ENCODE measurements at regions of chr7 and their contacts with region 1.

Region 1: DNA sequence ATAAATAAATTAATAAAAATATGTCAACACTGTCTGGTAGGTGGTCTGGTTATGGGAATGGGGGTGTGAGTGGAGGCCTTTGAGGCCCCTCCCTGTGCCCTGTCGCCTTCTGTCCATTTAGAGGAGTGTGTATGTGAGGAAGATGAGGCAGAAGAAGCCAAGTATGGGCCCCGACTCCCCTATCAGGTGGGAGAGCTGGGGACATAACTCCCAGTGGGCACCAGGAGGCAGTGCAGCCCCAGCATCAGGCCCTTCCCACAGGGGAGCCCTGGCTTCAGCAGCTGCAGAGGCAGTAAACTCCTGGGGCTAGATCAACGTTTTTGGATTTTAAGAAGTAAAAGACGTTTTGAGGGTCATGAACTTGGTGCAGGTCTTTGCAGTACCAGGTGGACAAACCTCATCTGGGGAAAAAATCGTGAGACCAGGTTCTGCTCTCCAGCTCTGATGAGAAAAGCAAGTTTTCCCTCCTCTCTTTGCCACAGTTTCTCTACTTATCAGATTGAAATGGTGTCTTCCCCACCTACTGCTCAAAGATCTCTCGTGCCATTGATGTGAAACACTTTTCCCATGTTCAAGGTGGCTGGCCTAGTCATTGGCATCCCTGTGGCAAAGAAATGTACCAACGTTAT is 167.8 kb upstream of the EEPD1 start:
- DNase-seq: peak; percentile 55 to 86 (median 72)
- ATAC-seq: peak; percentile 91 to 100 (median 98)
- H3K4me3 ChIP-seq: no peak overlapping the region
- H3K4me3 Mint-ChIP-seq: no peak overlapping the region
- H3K27ac ChIP-seq: no peak overlapping the region
- H3K27ac Mint-ChIP-seq: no peak overlapping the region
- H3K4me1 ChIP-seq: peaks cover 0 to 3% of the 10 kb centered on the region in 2 experiments
- H3K4me1 Mint-ChIP-seq: peaks cover 0 to 3% (median 0%) of the 10 kb centered on the region in 3 donors
- H3K27me3 ChIP-seq: peaks cover 0 to 17% of the 10 kb centered on the region in 2 experiments
- H3K27me3 Mint-ChIP-seq: peaks cover 0 to 2% of the 10 kb centered on the region in 2 donors

Region 2: GRCh38 chr7:35971133-35971891 is 13.9 kb before region 1 on chr7:
- CTCF ChIA-PET with region 1: interaction called in 1 of 2 experiments, 3 read pairs
- POLR2A ChIA-PET with region 1: interaction called in 1 of 2 experiments, 11 read pairs
- DNase-seq: peak in 1 of 35 experiments; percentile 14
- ATAC-seq: peak in 3 of 4 experiments; percentile 32 to 38 (median 34)
- H3K4me3 ChIP-seq: peak overlapping the region in 1 of 2 donors; percentile 38
- H3K4me3 Mint-ChIP-seq: peak overlapping the region; percentile 56 to 71 (median 61)
- H3K27ac ChIP-seq: no peak overlapping the region
- H3K27ac Mint-ChIP-seq: no peak overlapping the region
- H3K4me1 ChIP-seq: no peaks in the 10 kb centered on the region
- H3K4me1 Mint-ChIP-seq: peaks cover 4 to 5% (median 4%) of the 10 kb centered on the region in 3 donors
- H3K27me3 ChIP-seq: peaks cover 0 to 27% of the 10 kb centered on the region in 2 experiments
- H3K27me3 Mint-ChIP-seq: peaks cover 28 to 39% of the 10 kb centered on the region in 2 donors

Region 3: DNA sequence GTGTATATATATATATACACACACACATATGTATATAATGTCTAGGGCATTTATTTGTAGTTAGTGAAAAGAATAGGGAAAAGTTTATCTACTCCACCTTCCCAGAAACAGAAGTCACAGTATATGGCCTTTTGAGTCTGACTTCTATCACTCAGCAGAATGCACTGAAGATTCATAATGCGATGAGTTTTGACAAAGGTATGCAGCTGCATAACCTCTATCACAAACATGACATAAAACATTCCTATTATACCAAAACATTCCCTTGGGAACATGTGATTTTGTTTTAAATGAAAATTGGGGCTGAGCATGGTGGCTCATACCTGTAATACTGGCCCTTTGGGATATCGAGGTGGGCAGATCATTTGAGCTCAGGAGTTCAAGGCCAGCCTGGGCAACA is 30.5 kb after region 1 on chr7:
- CTCF ChIA-PET with region 1: no interaction called
- POLR2A ChIA-PET with region 1: no interaction called
- DNase-seq: no peak
- ATAC-seq: no peak
- H3K4me3 ChIP-seq: no peak overlapping the region
- H3K4me3 Mint-ChIP-seq: no peak overlapping the region
- H3K27ac ChIP-seq: no peak overlapping the region
- H3K27ac Mint-ChIP-seq: no peak overlapping the region
- H3K4me1 ChIP-seq: no peaks in the 10 kb centered on the region
- H3K4me1 Mint-ChIP-seq: no peaks in the 10 kb centered on the region
- H3K27me3 ChIP-seq: peaks cover 0 to 14% of the 10 kb centered on the region in 2 experiments
- H3K27me3 Mint-ChIP-seq: peaks cover 0 to 2% of the 10 kb centered on the region in 2 donors

Region 4: DNA sequence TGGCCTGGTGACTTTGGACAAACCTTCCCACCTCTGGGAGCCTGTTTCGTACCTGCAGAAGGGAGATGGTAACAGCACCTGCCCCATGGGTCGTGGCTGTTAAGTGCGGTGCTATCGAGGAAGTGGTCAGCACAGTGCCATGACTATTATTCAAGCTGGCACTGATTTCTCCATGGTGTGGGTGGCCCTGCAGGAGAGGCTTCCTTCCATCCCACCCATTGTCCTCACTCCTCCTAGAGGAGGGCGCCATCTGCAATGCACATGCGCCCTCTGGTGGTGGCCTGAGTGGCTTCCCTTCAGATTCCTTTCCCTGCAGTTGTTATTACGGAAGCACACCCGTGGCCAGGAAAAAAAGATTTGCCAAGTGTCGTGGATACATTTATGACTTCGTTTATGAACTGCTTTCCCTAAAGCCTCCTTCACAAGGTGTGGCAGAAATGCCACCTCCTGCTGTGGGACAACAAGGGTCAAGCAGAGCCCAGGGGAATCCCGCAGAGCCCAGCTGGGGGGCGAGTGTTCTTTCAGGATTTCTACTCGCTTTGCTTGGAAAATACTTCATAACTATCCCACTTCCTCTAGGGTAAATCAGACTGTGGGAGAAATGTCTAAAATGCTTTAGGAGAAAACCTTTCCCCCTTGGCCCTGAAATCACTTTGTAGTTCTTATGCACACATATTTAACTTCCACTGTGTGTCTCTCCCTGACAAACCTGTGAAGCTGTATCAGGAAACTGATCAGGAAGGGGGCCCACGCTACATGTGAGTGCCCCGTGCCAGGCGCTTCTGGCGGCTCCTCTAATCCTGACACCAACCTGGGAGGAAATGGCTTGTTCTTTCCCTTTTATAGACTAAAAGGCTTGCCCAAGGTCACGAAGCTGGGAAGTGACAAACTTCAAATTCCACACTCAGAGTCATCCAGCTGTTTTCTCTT is 306.4 kb after region 1 on chr7:
- CTCF ChIA-PET with region 1: interaction called, 45 to 62 read pairs
- POLR2A ChIA-PET with region 1: no interaction called
- DNase-seq: peak; percentile 14 to 87 (median 62)
- ATAC-seq: peak; percentile 39 to 53 (median 44)
- H3K4me3 ChIP-seq: peak overlapping the region in 1 of 2 donors; percentile 53
- H3K4me3 Mint-ChIP-seq: peak overlapping the region; percentile 60 to 69 (median 68)
- H3K27ac ChIP-seq: no peak overlapping the region
- H3K27ac Mint-ChIP-seq: peak overlapping the region in 1 of 2 donors; percentile 62
- H3K4me1 ChIP-seq: peaks cover 19 to 38% of the 10 kb centered on the region in 2 experiments
- H3K4me1 Mint-ChIP-seq: peaks cover 38 to 49% (median 46%) of the 10 kb centered on the region in 3 donors
- H3K27me3 ChIP-seq: no peaks in the 10 kb centered on the region
- H3K27me3 Mint-ChIP-seq: no peaks in the 10 kb centered on the region

Region 5: GRCh38 chr7:36318116-36318515 is 332.9 kb after region 1 on chr7:
- CTCF ChIA-PET with region 1: interaction called, 4 to 10 read pairs
- POLR2A ChIA-PET with region 1: no interaction called
- DNase-seq: no peak
- ATAC-seq: no peak
- H3K4me3 ChIP-seq: no peak overlapping the region
- H3K4me3 Mint-ChIP-seq: no peak overlapping the region
- H3K27ac ChIP-seq: no peak overlapping the region
- H3K27ac Mint-ChIP-seq: no peak overlapping the region
- H3K4me1 ChIP-seq: no peaks in the 10 kb centered on the region
- H3K4me1 Mint-ChIP-seq: no peaks in the 10 kb centered on the region
- H3K27me3 ChIP-seq: no peaks in the 10 kb centered on the region
- H3K27me3 Mint-ChIP-seq: peaks cover 0 to 5% of the 10 kb centered on the region in 2 donors

Measured in T-cell (primary cell).